ENCODE measurements at regions of chr6 and their contacts with region 1.

Region 1: DNA sequence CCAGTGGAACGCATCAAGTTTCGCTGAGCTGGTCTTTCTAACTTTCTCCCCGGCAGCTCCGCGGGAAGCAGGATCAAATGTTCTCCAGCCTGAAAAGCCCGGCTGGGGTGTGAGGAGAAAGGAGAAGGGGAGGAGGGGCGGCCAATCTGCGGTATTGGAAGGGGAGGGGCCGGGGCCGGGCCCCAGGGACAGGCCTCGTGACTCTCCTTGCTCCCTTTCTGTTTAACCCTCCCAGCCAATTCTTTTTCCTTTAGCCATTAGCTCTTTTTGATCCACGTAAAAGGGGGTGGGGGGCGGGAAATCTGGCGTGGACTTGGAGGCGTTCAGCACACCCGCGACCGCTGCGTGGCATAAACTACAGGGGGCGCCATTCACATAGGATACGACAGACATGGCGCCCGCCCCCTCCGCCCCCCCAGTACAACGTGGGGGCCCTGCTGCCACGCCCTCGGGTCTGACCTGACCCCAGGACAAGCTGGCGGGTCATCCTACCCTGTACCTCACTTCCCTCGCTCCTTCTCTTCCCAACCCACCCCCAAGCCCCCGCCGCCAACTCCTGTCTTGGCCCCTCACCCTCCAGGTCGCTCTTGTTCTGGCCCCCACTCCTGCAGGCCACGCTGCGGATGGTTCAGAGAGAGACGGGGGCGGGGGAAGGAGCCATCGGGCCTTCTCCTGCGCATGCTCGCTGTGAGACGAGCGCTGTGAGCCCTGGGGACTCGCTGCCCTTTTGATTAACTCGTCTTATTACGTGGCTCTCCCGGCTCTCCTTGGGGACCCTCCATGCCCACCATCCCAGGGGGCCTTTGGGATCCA is 7.8 kb upstream of the MDGA1 start:
- H3K4me3 ChIP-seq: peak overlapping the region; percentile 30
- H3K27ac ChIP-seq: peak overlapping the region; percentile 75
- H3K4me1 ChIP-seq: peaks cover 8% of the 10 kb centered on the region
- CTCF ChIP-seq: peak; percentile 67

Region 2: DNA sequence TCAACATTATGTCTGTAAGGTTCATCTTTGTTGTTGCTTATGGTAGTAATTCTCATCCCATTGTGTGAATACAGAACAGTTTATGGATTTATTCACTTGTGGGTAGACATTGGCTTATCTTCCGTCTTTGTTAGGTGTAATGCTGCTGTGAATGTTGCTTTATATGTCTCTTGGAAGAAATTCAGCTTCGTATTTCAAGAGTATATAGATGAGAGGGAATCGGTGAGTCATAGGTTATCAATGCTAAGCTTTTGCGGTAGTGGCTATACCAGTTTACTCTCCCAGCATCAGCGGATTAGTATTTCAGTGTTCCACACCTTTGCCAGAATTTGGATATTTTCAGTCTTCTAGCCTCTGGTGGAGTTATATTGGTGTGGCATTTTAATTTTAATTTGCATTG is 191.9 kb after region 1 on chr6:
- CTCF ChIA-PET with region 1: interaction called, 11 read pairs
- POLR2A ChIA-PET with region 1: no interaction called
- H3K4me3 ChIP-seq: peak overlapping the region; percentile 1; the same call in 1 of the 2 replicates
- H3K27ac ChIP-seq: no peak overlapping the region
- H3K4me1 ChIP-seq: peaks cover 12% of the 10 kb centered on the region
- CTCF ChIP-seq: no peak